Activated CD8-positive, alpha-beta T cell treated with anti-CD3 and anti-CD28 coated beads, Interleukin-2, amount 10 ng/mL, durations not matched to agents 7 days and 5 days (primary cell): ENCODE measurements at regions of chr9 and their contacts with region 1.

Region 1: GRCh38 chr9:34899535-34900158 is 58.4 kb upstream of the PHF24 start:
- DNase-seq: peak; percentile 86
- ATAC-seq: peak; percentile 100
- H3K4me3 Mint-ChIP-seq: no peak overlapping the region
- H3K27ac Mint-ChIP-seq: no peak overlapping the region
- H3K4me1 Mint-ChIP-seq: no peaks in the 10 kb centered on the region
- H3K27me3 Mint-ChIP-seq: peaks cover 36% of the 10 kb centered on the region

Region 2: GRCh38 chr9:34759432-34760134 is 140.1 kb before region 1 on chr9:
- CTCF ChIA-PET with region 1: interaction called, 12 read pairs
- POLR2A ChIA-PET with region 1: no interaction called
- DNase-seq: no peak
- ATAC-seq: no peak
- H3K4me3 Mint-ChIP-seq: no peak overlapping the region
- H3K27ac Mint-ChIP-seq: no peak overlapping the region
- H3K4me1 Mint-ChIP-seq: peaks cover 8% of the 10 kb centered on the region
- H3K27me3 Mint-ChIP-seq: peaks cover 27% of the 10 kb centered on the region

Region 3: GRCh38 chr9:34823786-34824185 is 75.9 kb before region 1 on chr9:
- CTCF ChIA-PET with region 1: no interaction called
- POLR2A ChIA-PET with region 1: no interaction called
- DNase-seq: no peak
- ATAC-seq: no peak
- H3K4me3 Mint-ChIP-seq: no peak overlapping the region
- H3K27ac Mint-ChIP-seq: no peak overlapping the region
- H3K4me1 Mint-ChIP-seq: no peaks in the 10 kb centered on the region
- H3K27me3 Mint-ChIP-seq: peaks cover 4% of the 10 kb centered on the region

Region 4: DNA sequence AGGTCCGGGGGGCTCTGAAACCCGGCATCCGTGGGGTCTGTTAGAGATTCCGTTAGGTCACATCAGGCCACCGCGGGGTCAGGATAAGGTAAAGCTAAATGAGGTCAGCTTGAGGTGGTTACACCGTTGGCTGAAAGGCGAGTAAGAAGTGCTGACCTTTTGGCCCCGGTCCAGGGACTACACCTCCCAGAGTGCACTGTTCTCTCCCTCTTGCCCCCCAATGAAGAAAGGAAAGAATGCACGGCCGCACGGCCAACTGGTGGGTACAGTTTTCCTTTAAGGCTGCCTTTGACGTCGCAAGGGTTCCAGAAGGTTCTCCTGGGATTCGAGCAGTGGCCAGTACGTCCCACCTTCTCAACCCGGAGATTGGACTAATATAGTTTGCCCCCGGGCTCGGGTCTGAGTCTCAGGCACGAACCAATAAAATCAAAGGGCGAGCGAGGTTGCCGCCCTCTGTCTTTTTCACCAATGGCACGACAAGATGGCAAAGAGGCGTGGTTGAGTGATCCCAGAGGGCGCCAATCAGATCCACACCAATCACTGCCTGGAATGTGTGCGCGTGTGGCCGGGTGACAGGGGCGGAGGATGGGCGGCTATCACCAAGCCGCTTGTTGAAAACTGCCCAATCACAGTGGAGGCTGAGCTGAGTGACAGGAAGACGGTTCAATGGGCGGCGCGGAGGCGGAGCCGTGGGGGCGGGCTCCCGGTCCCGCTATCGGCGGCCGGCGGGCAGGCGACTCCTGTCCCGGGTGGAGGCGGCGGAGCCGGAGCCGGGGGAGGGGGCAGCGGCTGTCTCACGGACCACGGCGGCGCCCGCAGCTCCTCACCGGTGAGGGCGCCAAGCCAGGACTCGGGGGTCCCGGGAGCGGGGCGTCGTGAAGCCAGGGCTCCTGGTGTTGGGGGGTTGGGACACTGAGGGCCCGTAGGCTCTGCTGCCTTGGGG is 89.6 kb after region 1 on chr9 and contains the start of gene DNAJB5:
- CTCF ChIA-PET with region 1: interaction called, 116 read pairs
- POLR2A ChIA-PET with region 1: no interaction called
- DNase-seq: peak; percentile 98
- ATAC-seq: peak; percentile 96
- H3K4me3 Mint-ChIP-seq: peak within 1 kb of the TSS; percentile 92
- H3K27ac Mint-ChIP-seq: peak within 1 kb of the TSS; percentile 93
- H3K4me1 Mint-ChIP-seq: peaks cover 61% of the 10 kb centered on the region
- H3K27me3 Mint-ChIP-seq: no peaks in the 10 kb centered on the region
- total RNA-seq, gene DNAJB5: 5.1 to 5.5 TPM

Region 5: GRCh38 chr9:35001803-35002502 is 102.3 kb after region 1 on chr9:
- CTCF ChIA-PET with region 1: interaction called, 21 read pairs
- POLR2A ChIA-PET with region 1: no interaction called
- DNase-seq: no peak
- ATAC-seq: no peak
- H3K4me3 Mint-ChIP-seq: no peak overlapping the region
- H3K27ac Mint-ChIP-seq: no peak overlapping the region
- H3K4me1 Mint-ChIP-seq: peaks cover 10% of the 10 kb centered on the region
- H3K27me3 Mint-ChIP-seq: no peaks in the 10 kb centered on the region

Region 6: GRCh38 chr9:35071814-35072460 is 172.3 kb after region 1 on chr9:
- CTCF ChIA-PET with region 1: interaction called, 14 read pairs
- POLR2A ChIA-PET with region 1: interaction called, 4 read pairs
- DNase-seq: peak; percentile 76
- ATAC-seq: peak; percentile 66
- H3K4me3 Mint-ChIP-seq: peak overlapping the region; percentile 92
- H3K27ac Mint-ChIP-seq: peak overlapping the region; percentile 96
- H3K4me1 Mint-ChIP-seq: peaks cover 54% of the 10 kb centered on the region
- H3K27me3 Mint-ChIP-seq: no peaks in the 10 kb centered on the region

Region 7: DNA sequence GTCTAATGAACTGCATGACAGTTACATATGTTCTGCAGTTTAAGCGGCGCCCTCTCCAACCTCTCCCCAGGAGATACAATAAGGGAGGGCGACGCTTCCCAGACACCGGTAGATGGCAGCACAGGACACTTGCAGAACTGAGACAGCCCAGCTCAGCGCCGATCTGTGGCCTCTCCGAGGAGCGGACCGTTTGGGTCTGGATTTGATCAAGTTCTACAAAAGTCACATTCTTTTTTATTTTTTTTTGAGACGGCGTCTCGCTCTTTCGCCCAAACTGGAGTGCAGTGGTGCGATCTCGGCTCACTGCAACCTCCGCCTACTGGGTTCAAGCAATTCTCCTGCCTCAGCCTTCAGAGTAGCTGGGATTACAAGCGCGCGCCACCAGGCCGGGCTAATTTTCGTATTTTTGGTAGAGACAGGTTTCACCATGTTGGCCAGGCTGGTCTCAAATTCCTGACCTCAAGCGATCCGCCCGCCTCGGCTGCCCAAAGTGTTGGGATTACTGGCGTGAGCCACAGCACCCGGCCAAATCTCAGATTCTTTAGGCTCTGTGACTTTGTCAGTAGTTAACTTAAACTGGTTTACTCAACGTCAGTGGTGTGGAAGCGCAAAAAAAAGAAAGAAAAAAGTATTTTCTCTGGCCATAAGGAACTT is 217.4 kb after region 1 on chr9:
- CTCF ChIA-PET with region 1: interaction called, 15 read pairs
- POLR2A ChIA-PET with region 1: no interaction called
- DNase-seq: peak; percentile 95
- ATAC-seq: peak; percentile 56
- H3K4me3 Mint-ChIP-seq: peak overlapping the region; percentile 95
- H3K27ac Mint-ChIP-seq: peak overlapping the region; percentile 92
- H3K4me1 Mint-ChIP-seq: peaks cover 36% of the 10 kb centered on the region
- H3K27me3 Mint-ChIP-seq: no peaks in the 10 kb centered on the region